ENCODE measurements at regions of chr17 and their contacts with region 1.

Region 1: DNA sequence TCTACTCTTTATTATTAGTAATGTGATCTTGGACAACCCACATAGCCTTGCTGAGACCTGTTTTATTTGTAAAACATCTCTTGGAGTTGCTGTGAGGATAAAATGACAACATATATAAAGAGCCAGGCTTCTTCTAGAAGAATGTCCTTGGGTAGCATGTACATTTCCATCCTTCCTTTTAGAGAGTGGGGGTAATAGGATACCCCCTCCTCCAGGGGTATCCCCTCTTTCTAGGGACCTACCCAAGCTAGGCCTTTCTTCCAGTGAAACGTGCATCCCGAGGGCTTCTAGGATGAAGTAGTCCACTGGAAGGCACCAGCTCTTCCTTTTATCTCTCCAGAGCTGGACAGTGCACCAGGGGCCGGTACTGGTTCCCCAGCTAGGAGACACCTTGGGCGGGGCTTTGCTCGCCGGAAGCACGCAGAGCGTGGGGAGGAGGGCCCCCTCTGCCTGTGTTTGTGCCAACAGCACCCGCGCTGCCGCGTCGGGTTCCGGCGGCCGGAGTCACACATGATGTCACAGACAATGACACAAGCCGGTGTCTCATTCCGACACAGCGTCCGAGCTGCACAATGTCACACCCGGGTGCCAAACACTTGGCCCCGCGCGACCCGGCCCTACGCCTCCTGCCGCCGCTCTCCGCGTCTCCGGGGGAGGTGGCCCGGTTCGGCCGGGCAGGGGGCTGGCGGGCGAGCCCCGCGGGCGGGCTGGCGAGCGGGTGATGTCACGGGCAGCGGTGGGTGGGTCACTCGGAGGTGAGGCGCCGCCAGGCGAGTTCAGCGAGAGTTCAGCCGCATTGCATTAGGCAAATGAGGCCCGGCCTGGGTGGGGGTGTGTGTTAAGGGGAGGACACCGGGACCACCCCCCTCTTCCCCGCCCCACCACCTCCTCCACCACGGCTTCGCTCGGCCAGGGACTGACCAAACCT is 23.4 kb downstream of the GJD3 start:
- DNase-seq: peak; percentile 91
- H3K4me3 Mint-ChIP-seq: peak overlapping the region; percentile 38
- H3K27ac Mint-ChIP-seq: peak overlapping the region; percentile 61
- H3K4me1 Mint-ChIP-seq: peaks cover 71% of the 10 kb centered on the region
- H3K27me3 Mint-ChIP-seq: no peaks in the 10 kb centered on the region

Region 2: GRCh38 chr17:40303009-40303657 is 38.0 kb before region 1 on chr17:
- CTCF ChIA-PET with region 1: interaction called, 4 read pairs
- intact Hi-C with region 1: loop called (anchors 1 kb)
- DNase-seq: peak; percentile 61
- H3K4me3 Mint-ChIP-seq: no peak overlapping the region
- H3K27ac Mint-ChIP-seq: no peak overlapping the region
- H3K4me1 Mint-ChIP-seq: peaks cover 10% of the 10 kb centered on the region
- H3K27me3 Mint-ChIP-seq: no peaks in the 10 kb centered on the region

Measured in activated naive CD4-positive, alpha-beta T cell treated with anti-CD3 and anti-CD28 coated beads for 36 hours (primary cell).